Gastrocnemius medialis (tissue), 4 donors: ENCODE measurements at regions of chr3 and their contacts with region 1.

Region 1: DNA sequence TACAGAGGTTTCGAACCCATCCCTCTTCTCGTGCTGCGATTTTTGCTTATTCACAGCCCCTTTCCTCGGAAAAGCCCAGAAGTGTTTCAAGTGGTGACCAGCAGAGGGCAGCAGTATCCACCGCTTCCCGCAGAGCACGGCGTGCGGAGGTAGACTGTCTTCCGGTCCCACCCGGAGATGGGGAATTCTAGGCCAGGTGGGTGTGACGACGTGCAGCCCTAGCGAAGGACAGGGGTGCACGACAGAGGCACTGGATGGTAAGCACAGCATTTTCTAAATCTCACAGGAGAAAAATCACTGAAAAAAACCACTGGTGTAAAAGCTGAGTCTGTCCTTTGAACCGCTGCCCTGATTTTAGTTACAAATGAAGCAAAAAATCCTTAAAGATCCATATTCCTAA is 7.4 kb upstream of the PSMD6 start:
- DNase-seq: peak; percentile 20 to 41
- ATAC-seq: peak; percentile 78 to 80
- H3K4me3 ChIP-seq: peak overlapping the region; percentile 35 to 57 (median 44)
- H3K27ac ChIP-seq: no peak overlapping the region
- H3K4me1 ChIP-seq: peaks cover 0 to 7% of the 10 kb centered on the region in 2 donors
- H3K27me3 ChIP-seq: no peaks in the 10 kb centered on the region
- CTCF ChIP-seq: peak; percentile 75 to 91 (median 88)
- POLR2A ChIP-seq: no peak

Region 2: GRCh38 chr3:64073158-64073761 is 42.5 kb after region 1 on chr3:
- in situ Hi-C with region 1: no loop called
- intact Hi-C with region 1: no loop called
- DNase-seq: no peak
- ATAC-seq: no peak
- H3K4me3 ChIP-seq: no peak overlapping the region
- H3K27ac ChIP-seq: no peak overlapping the region
- H3K4me1 ChIP-seq: no peaks in the 10 kb centered on the region
- H3K27me3 ChIP-seq: no peaks in the 10 kb centered on the region
- CTCF ChIP-seq: no peak
- POLR2A ChIP-seq: no peak

Region 3: DNA sequence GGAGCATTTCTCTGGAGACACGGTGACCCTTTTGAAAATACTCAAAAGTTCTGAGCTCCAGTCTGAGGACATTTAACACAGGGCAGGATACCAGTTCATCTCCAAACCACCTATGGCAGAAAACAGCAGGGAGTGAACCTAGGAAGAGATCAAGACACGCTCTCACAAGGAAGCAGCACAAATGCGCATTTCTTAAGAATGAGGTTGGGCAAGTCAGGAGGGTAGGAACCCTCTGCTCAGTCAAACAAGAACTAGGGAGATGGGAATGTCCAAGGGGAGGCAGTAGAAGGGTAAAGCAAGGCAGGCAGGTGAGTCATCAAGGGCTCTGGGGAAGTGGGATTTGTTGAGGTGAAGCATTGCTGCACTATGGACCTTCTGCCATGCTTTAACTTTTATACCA is 52.8 kb after region 1 on chr3:
- in situ Hi-C with region 1: no loop called
- intact Hi-C with region 1: no loop called
- DNase-seq: no peak
- ATAC-seq: no peak
- H3K4me3 ChIP-seq: no peak overlapping the region
- H3K27ac ChIP-seq: no peak overlapping the region
- H3K4me1 ChIP-seq: no peaks in the 10 kb centered on the region
- H3K27me3 ChIP-seq: no peaks in the 10 kb centered on the region
- CTCF ChIP-seq: no peak
- POLR2A ChIP-seq: no peak

Region 4: GRCh38 chr3:64399205-64399800 is 368.6 kb after region 1 on chr3:
- in situ Hi-C with region 1: loop called in 2 of 4 experiments (anchors 10 to 25 kb)
- intact Hi-C with region 1: loop called (anchors 1 kb)
- DNase-seq: no peak
- ATAC-seq: no peak
- H3K4me3 ChIP-seq: no peak overlapping the region
- H3K27ac ChIP-seq: no peak overlapping the region
- H3K4me1 ChIP-seq: no peaks in the 10 kb centered on the region
- H3K27me3 ChIP-seq: no peaks in the 10 kb centered on the region
- CTCF ChIP-seq: peak in 4 of 5 experiments; percentile 23 to 60 (median 54)
- POLR2A ChIP-seq: no peak

Region 5: GRCh38 chr3:64484289-64484992 is 453.7 kb after region 1 on chr3:
- in situ Hi-C with region 1: loop called (anchors 5 kb)
- intact Hi-C with region 1: loop called (anchors 1 kb)
- DNase-seq: peak; percentile 28 to 54
- ATAC-seq: peak; percentile 79 to 88
- H3K4me3 ChIP-seq: no peak overlapping the region
- H3K27ac ChIP-seq: no peak overlapping the region
- H3K4me1 ChIP-seq: peaks cover 2 to 7% of the 10 kb centered on the region in 2 donors
- H3K27me3 ChIP-seq: no peaks in the 10 kb centered on the region
- CTCF ChIP-seq: peak; percentile 39 to 81 (median 78)
- POLR2A ChIP-seq: no peak